ENCODE measurements at regions of chr1 and their contacts with region 1.

Region 1: DNA sequence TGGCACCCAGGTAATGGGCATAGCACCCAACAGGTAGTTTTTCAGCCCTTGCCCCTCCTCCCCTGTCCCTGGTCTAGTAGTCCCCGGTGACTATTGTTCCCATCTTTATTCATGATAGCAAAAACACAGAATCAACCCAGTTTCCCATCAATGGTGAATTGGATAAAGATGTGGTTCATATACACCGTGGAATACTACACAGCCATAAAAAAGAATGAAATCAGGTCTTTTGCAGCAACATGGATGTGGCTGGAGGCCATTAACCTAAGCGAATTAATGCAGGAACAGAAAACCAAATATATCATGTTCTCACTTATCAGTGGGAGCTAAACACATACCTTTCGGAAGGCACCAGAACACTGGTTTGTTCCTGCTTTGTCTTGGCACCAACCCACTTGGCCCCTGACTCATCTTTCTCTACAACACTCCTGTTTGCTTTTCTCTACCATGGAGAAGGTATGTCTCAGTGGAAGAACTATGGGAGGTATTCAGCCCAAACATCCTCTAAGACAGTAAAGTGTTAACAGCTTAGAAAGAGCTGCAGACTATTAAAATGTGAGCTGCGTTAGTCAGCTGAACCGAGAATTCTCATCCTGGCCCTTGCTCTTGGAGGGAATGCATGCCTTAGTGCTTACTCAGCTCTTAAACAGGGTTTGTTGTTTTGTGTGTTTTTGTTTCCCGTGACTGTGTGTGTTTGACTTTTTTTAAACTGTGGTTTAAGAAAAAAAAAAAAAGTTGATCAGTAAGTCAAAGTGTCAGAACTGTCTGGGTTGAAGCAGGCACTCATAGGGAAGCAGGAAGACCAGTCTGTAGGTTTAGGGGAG is 203.0 kb downstream of the TOMM20 start:
- DNase-seq: peak; percentile 99
- ATAC-seq: peak; percentile 96
- H3K4me3 ChIP-seq: no peak overlapping the region
- H3K27ac ChIP-seq: peak overlapping the region; percentile 60
- H3K4me1 ChIP-seq: peaks cover 17% of the 10 kb centered on the region
- H3K27me3 ChIP-seq: no peaks in the 10 kb centered on the region
- CTCF ChIP-seq: no peak
- POLR2A ChIP-seq: no peak
- RAD21 ChIP-seq: peak; percentile 48

Region 2: DNA sequence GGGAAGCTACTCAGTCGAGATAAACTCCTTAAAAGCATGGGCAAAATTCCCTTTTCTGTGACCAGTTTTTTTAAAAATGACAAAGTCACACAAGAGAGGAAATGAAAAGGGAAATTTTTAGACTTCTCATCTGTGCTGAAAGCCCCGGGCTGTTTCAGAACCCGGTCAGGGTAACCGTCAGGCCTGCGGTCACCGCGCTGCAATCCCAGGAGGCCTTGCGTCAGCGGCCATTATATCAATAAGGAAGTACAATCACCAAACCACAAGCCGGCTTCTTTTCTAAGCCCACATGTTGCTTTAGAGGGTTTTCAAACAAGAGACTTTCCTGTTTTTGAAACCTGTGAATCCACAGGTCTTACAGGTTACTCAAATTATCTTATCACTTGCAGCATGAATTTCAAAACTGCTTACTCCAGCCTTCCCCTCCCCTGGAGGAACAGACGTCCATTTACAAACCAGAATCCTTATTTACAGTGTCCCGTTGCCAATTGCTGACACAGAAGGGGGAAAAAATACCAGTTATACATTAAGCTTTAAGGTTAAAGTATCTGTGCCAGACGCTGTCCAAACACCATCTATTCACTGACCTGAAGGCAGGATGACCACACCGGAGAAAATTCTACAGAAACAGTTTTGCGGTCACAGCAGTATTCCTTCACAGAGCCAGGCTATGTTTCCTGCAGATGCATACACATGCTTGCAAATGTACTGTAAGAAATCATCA is 37.7 kb after region 1 on chr1:
- CTCF ChIA-PET with region 1: interaction called, 3 read pairs
- POLR2A ChIA-PET with region 1: no interaction called
- dilution Hi-C with region 1: no loop called
- in situ Hi-C with region 1: no loop called
- intact Hi-C with region 1: loop called (anchors 1 kb)
- DNase-seq: peak; percentile 95
- ATAC-seq: peak; percentile 33
- H3K4me3 ChIP-seq: no peak overlapping the region
- H3K27ac ChIP-seq: peak overlapping the region; percentile 90
- H3K4me1 ChIP-seq: peaks cover 21% of the 10 kb centered on the region
- H3K27me3 ChIP-seq: no peaks in the 10 kb centered on the region
- CTCF ChIP-seq: no peak
- POLR2A ChIP-seq: no peak
- RAD21 ChIP-seq: no peak; the same call in 1 of the 2 replicates